ENCODE measurements at regions of chr2 and their contacts with region 1.

Region 1: DNA sequence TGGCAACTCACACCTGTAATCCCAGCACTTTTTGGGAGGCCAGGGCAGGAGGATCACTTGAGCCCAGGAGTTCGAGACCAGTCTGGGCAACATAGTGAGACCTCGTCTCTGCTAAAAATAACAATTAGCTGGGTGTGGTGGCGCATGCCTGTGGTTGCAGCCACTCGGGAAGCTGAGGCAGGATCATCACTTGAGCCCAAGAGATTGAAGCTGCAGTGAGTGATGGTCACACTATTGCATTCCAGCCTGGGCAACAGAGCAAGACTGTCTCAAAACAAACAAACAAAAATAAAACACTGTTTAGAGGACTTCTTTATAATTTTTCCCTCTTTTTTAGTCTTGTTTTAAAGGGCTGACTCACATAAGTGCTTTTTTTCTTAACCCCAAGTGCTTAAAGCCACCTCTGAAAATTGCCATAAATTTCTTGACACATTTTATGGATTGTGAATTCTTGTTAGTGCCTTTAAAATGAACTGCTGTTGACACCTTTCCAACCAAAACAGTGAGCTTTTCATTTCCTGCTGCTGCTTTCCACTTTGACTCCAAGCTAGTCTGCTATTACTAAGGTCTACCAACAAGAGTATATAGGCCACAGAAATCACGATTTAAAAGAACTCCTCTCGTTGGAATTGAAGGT is 41.7 kb downstream of the CYP20A1 start:
- DNase-seq: peak; percentile 96
- H3K4me3 ChIP-seq: no peak overlapping the region
- H3K27ac ChIP-seq: peak overlapping the region; percentile 20
- H3K4me1 ChIP-seq: peaks cover 17% of the 10 kb centered on the region
- H3K27me3 ChIP-seq: no peaks in the 10 kb centered on the region
- CTCF ChIP-seq: no peak
- POLR2A ChIP-seq: no peak

Region 2: GRCh38 chr2:203400816-203401585 is 120.5 kb after region 1 on chr2:
- CTCF ChIA-PET with region 1: no interaction called
- POLR2A ChIA-PET with region 1: no interaction called
- dilution Hi-C with region 1: no loop called
- intact Hi-C with region 1: loop called (anchors 5 kb)
- DNase-seq: peak; percentile 41
- H3K4me3 ChIP-seq: no peak overlapping the region
- H3K27ac ChIP-seq: peak overlapping the region; percentile 31
- H3K4me1 ChIP-seq: peaks cover 40% of the 10 kb centered on the region
- H3K27me3 ChIP-seq: no peaks in the 10 kb centered on the region
- CTCF ChIP-seq: no peak
- POLR2A ChIP-seq: no peak

Region 3: DNA sequence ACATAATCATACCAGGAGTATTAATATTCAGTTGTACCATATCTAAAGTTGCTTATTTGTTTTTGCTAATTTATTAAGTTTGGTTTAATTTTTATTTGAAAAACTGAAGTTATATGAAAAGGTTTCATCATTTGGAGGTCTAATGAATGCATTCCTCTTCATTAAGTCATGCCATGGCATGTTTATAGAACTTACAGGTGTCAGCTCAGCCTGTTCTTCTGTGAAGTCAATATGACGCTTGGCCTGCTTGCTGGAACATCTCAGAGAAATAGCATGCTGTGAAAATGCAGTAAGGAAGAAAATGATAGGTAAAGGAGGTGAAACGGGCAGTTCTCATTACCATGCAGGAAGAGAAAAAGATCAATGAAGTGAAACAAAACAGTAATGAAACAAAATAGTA is 196.3 kb after region 1 on chr2:
- CTCF ChIA-PET with region 1: no interaction called
- POLR2A ChIA-PET with region 1: no interaction called
- dilution Hi-C with region 1: no loop called
- intact Hi-C with region 1: no loop called
- DNase-seq: no peak
- H3K4me3 ChIP-seq: no peak overlapping the region
- H3K27ac ChIP-seq: no peak overlapping the region
- H3K4me1 ChIP-seq: no peaks in the 10 kb centered on the region
- H3K27me3 ChIP-seq: no peaks in the 10 kb centered on the region
- CTCF ChIP-seq: no peak
- POLR2A ChIP-seq: no peak

Measured in endothelial cell of umbilical vein (primary cell).